Activated CD4-positive, alpha-beta T cell treated with anti-CD3 and anti-CD28 coated beads, Interleukin-2, amount 10 ng/mL, durations not matched to agents 7 days and 5 days (primary cell): ENCODE measurements at regions of chr18 and their contacts with region 1.

Region 1: DNA sequence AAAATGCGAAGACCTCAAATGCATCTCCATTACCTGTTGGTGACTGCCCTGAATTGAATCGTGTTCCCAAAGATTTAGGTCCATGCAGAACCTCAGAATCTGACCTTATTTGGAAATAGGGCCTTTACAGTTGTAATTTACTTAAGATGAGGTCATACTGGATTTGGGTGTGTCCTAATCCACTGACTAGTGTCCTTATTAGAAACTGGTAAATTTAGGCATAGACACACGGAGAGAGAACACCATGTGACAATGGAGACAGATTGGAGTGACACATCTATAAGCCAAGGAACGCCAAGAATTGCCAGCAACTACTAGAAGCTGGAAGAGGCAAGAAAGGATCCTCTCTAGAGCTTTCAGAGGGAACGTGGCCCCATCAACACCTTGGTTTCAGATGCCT is 203.1 kb downstream of the SMAD2 start:
- DNase-seq: no peak
- H3K4me3 Mint-ChIP-seq: no peak overlapping the region
- H3K27ac Mint-ChIP-seq: no peak overlapping the region
- H3K4me1 Mint-ChIP-seq: no peaks in the 10 kb centered on the region
- H3K27me3 Mint-ChIP-seq: peaks cover 2% of the 10 kb centered on the region

Region 2: GRCh38 chr18:47826157-47827074 is 99.0 kb after region 1 on chr18:
- CTCF ChIA-PET with region 1: no interaction called
- POLR2A ChIA-PET with region 1: no interaction called
- DNase-seq: no peak
- H3K4me3 Mint-ChIP-seq: no peak overlapping the region
- H3K27ac Mint-ChIP-seq: no peak overlapping the region
- H3K4me1 Mint-ChIP-seq: peaks cover 2% of the 10 kb centered on the region
- H3K27me3 Mint-ChIP-seq: no peaks in the 10 kb centered on the region

Region 3: DNA sequence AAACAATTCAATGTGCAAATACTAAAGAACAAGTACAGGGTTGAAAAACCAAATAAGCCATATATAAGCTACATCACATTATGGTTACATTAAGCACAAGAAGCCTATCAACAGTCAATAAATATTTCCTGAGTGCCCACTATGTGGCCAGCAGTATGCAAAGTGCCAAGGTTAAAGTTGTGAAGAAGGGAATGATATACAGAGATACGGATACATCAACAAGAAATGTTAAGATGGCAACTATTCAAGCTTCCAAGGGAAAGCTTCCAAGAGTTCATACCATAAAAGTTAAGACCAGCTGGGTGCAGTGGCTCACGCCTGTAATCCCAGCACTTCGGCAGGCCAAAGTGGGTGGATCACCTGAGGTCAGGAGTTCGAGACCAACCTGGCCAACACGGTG is 1719.1 kb after region 1 on chr18:
- CTCF ChIA-PET with region 1: no interaction called
- POLR2A ChIA-PET with region 1: interaction called, 20 read pairs
- DNase-seq: no peak
- H3K4me3 Mint-ChIP-seq: no peak overlapping the region
- H3K27ac Mint-ChIP-seq: no peak overlapping the region
- H3K4me1 Mint-ChIP-seq: peaks cover 11% of the 10 kb centered on the region
- H3K27me3 Mint-ChIP-seq: no peaks in the 10 kb centered on the region